ENCODE measurements at regions of chr4 and their contacts with region 1.

Region 1: GRCh38 chr4:4507923-4508322 is 33.9 kb downstream of the STX18 start:
- DNase-seq: no peak
- H3K4me3 Mint-ChIP-seq: no peak overlapping the region
- H3K27ac Mint-ChIP-seq: no peak overlapping the region
- H3K4me1 Mint-ChIP-seq: peaks cover 9% of the 10 kb centered on the region
- H3K27me3 Mint-ChIP-seq: no peaks in the 10 kb centered on the region

Region 2: DNA sequence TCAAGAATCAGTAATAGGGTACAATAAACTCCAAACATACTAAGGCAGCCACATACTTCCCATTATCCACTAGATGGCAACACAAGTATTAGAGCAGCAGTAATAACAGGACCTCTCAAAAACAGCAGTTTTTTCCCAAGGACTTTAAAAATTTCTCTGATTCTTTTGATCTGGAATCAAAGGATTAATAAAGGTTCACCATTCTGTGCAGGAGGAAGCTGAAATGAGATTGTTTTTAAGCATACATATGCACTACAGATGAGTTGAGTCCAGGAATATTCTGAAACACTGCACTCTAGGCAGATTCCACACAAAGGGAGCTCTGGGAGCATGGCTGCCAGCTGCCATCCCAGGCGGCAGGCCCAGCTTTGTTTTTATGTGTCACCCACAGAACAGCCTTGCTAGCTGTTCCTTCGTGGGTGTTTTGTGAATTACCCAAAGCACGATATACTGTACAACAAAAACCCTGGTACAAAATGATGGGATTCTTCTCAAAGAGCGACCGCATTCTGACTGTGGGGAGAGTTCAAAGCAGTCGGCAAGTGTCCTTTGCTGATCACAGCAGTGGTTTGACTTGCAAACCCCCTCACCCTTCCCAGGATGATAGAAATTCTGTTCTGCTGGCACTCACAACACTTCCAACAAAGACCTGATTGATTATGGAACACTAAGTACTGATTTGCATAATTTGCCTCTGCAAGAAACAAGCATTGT is 27.1 kb before region 1 on chr4:
- CTCF ChIA-PET with region 1: no interaction called
- POLR2A ChIA-PET with region 1: no interaction called
- intact Hi-C with region 1: no loop called
- DNase-seq: no peak
- H3K4me3 Mint-ChIP-seq: no peak overlapping the region
- H3K27ac Mint-ChIP-seq: no peak overlapping the region
- H3K4me1 Mint-ChIP-seq: peaks cover 7% of the 10 kb centered on the region
- H3K27me3 Mint-ChIP-seq: no peaks in the 10 kb centered on the region

Region 3: DNA sequence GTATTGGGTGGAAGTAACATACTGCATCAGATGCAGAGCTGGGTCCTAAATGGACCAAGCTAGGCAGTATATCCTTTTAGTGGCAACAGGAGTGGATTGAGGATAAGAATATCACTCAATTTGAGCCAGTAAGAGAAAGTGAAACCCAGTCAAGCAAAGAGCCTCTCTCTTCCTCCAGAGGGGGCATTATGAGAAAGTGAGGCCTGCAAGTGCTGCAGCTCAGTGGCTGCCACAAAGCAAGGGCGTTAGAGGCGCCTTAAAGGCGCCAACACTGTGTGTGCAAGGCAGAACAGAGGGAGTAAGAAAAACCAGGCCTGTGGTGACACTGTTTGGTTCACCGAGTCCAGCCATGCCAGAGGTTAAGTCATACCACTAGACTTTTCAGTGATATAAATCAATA is 16.4 kb after region 1 on chr4:
- CTCF ChIA-PET with region 1: interaction called, 14 read pairs
- POLR2A ChIA-PET with region 1: no interaction called
- intact Hi-C with region 1: no loop called
- DNase-seq: peak; percentile 57
- H3K4me3 Mint-ChIP-seq: no peak overlapping the region
- H3K27ac Mint-ChIP-seq: no peak overlapping the region
- H3K4me1 Mint-ChIP-seq: peaks cover 29% of the 10 kb centered on the region
- H3K27me3 Mint-ChIP-seq: no peaks in the 10 kb centered on the region